ENCODE measurements at regions of chr5 and their contacts with region 1.

Region 1: DNA sequence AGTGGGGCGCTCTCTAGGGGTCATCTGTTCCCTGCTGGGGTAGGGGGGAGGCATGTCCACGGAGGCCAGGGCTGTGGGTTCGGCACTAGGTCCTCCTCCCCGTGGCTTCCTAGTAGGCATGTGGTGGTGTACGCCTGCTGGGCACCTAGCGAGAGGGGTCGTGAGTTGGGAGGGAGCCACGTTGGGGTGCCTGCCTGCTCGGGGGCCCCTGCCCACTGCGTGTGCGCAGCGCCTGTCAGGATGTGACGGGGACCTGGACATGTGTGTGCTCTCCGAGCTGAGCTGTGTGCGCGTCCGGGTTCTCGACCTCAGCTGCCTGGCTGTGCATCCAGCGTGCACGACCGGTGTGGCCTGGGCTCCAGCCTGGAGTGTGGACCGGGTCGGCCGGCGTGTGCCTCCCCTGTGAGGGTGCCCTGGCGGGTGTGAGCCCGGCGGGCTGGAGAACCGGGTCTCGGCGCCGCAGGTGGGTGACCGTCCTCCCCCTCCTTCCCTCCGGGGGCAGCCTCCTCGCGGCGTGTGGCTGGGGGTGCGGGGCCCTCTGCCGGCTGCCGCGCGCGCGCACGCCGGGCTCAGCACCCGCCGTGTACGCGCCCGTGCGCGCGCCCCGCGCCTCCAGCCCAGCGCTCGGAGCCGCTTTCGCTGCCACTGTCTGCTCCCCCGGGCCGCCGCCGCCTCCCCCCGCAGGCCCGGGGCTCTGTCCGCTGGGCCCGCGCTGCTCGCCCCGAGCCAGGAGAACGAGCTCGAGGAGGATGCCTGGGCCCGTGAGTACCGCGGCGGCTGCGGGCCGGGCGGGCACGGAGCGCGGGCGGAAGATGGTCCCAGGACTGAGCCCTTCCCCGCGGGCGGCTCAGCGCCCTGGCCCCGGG is at the start of gene PRR7:
- DNase-seq: peak; percentile 76
- H3K27ac ChIP-seq: peak within 1 kb of the TSS; percentile 88
- CTCF ChIP-seq: no peak

Region 2: GRCh38 chr5:177390363-177391300 is 55.8 kb before region 1 on chr5:
- CTCF ChIA-PET with region 1: interaction called, 39 read pairs
- POLR2A ChIA-PET with region 1: no interaction called
- DNase-seq: peak; percentile 94
- H3K27ac ChIP-seq: peak overlapping the region; percentile 99
- CTCF ChIP-seq: peak; percentile 98

Region 3: DNA sequence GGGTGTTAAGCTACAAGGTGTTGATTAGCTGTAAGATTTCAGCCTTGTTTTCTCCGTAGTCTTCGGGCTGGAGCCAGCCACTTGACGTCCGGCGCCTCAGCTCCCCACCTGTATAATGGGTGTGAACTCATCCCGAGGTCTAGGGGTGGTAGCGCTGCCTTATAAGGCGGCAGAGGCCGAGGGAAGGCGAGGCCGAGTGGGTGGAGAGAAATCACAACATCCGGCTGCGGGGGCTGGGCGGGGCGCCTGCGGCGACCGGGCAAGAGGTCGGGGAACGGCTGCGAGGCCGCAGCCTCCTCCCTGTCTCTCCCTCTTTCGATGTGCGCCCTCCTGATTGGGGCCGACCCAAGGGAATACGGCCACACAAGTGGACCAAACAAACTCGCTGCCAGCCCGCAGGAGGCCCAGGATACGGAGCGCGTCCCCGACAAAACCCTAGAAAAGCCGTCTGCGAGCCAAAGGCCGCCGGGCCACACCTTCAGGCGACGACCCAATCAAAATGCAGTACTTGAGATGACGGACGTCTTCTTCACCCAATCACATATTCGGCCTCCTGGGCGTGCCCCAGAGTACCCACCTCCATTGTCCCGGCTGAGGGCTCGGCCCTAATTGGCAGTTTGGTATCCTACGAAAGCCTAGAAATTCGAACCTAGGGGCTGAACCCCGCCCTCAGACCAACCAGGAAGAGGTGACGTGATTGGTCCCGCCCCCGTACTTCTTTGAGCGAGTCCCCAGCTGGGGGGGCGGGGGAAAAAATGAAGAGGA is 20.4 kb before region 1 on chr5:
- CTCF ChIA-PET with region 1: interaction called, 5 read pairs
- POLR2A ChIA-PET with region 1: interaction called, 11 read pairs
- DNase-seq: peak; percentile 100
- H3K27ac ChIP-seq: peak overlapping the region; percentile 94
- CTCF ChIP-seq: no peak

Measured in RWPE1 (cell line).